Activated T-helper 2 cell treated with anti-CD3 and anti-CD28 coated beads, Interferon-gamma antibody, Interleukin-2, Interleukin-4, amounts not matched to agents 10 μg/mL and 5 μg/mL and 100 μg/mL, durations not matched to agents 14 hours and 24 hours and 36 hours (primary cell): ENCODE measurements at regions of chr5 and their contacts with region 1.

Region 1: DNA sequence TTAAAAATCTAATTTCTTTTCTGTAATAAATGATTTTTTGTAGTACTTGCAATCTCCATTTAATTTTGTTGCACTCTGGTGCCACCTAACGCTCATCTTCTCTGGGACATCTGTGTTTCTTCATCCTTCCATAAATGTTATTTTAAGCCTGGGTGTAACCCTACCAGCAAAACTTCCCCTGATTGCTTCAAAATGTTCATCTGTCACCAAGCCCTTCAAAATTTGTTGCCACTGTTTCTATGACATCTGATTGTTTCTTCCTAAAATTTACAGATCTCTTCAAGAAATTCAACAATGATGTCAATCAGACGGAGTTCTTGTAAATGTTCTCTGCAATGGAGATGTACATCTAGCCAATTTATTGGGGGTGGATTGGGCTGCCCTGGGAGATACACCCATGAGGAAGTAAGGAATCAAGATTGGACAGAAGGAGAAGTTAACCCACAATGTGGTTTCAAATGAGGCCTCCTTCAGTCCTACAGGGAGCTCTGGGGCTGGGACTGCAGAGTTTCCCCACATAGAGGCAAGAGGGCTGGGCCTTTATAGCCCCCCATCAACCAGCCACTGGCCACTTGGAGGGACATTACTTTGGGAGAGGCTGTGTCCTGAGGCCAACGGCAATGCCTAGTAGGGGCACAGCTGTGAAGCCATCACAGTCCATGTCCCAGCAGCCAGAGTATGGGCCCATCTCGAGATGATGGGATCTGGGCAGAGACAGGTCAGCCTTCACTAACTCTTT is 23.3 kb downstream of the MCTP1 start:
- DNase-seq: no peak
- H3K4me3 Mint-ChIP-seq: no peak overlapping the region
- H3K27ac Mint-ChIP-seq: no peak overlapping the region
- H3K4me1 Mint-ChIP-seq: no peaks in the 10 kb centered on the region
- H3K27me3 Mint-ChIP-seq: no peaks in the 10 kb centered on the region

Region 2: GRCh38 chr5:94968507-94969095 is 293.0 kb before region 1 on chr5:
- intact Hi-C with region 1: loop called (anchors 2 kb)
- DNase-seq: no peak
- H3K4me3 Mint-ChIP-seq: no peak overlapping the region
- H3K27ac Mint-ChIP-seq: no peak overlapping the region
- H3K4me1 Mint-ChIP-seq: no peaks in the 10 kb centered on the region
- H3K27me3 Mint-ChIP-seq: no peaks in the 10 kb centered on the region

Region 3: DNA sequence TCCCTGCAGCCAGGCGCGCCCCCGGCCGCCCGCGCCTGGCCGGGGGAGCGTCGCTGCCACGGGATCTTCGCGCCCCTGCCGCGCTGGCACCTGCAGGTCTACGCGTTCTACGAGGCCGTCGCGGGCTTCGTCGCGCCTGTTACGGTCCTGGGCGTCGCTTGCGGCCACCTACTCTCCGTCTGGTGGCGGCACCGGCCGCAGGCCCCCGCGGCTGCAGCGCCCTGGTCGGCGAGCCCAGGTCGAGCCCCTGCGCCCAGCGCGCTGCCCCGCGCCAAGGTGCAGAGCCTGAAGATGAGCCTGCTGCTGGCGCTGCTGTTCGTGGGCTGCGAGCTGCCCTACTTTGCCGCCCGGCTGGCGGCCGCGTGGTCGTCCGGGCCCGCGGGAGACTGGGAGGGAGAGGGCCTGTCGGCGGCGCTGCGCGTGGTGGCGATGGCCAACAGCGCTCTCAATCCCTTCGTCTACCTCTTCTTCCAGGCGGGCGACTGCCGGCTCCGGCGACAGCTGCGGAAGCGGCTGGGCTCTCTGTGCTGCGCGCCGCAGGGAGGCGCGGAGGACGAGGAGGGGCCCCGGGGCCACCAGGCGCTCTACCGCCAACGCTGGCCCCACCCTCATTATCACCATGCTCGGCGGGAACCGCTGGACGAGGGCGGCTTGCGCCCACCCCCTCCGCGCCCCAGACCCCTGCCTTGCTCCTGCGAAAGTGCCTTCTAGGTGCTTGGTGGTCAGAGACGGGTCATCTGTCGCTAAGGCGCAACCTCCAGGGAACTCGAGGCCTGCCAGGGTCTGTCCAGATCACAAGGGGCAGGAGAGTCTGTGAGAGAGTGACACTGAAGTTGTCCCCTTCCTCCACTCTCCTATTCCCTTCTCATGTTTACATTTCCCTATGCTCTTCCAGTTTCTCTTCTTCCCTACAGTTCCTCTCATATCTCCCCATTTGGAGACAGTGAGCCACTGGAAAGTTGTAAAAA is 359.5 kb after region 1 on chr5:
- intact Hi-C with region 1: no loop called
- DNase-seq: peak; percentile 40
- H3K4me3 Mint-ChIP-seq: peak overlapping the region; percentile 74
- H3K27ac Mint-ChIP-seq: peak overlapping the region; percentile 59
- H3K4me1 Mint-ChIP-seq: peaks cover 29% of the 10 kb centered on the region
- H3K27me3 Mint-ChIP-seq: peaks cover 21% of the 10 kb centered on the region

Region 4: DNA sequence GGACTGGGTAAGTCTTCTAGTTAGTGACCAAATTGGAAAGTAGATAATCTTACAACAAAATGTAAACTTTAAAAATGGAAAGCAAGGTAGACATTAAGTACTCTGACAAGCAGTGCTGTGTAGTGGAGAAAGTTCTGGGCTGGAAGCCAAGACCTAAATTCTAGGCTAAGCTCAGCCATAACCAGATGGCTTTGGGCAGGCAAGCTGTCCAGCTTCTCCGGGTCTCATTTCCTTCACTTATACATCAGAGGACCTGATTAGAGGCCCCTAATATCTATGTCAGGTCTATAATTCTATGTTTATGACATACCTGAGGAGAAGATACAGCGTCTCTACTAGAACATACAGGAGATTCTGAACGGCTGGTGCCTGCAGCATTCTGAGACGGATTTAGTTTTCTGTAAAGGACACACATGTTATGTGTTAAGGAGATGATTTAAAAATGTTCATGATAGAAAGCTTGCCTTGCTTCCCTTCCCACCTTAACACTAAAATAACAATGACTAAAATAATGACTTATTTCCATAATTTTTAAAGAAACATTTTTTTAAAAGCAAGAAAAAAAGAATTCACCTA is 638.9 kb after region 1 on chr5:
- intact Hi-C with region 1: no loop called
- DNase-seq: no peak
- H3K4me3 Mint-ChIP-seq: no peak overlapping the region
- H3K27ac Mint-ChIP-seq: no peak overlapping the region
- H3K4me1 Mint-ChIP-seq: peaks cover 22% of the 10 kb centered on the region
- H3K27me3 Mint-ChIP-seq: no peaks in the 10 kb centered on the region